ENCODE measurements at regions of chr1 and their contacts with region 1.

Region 1: DNA sequence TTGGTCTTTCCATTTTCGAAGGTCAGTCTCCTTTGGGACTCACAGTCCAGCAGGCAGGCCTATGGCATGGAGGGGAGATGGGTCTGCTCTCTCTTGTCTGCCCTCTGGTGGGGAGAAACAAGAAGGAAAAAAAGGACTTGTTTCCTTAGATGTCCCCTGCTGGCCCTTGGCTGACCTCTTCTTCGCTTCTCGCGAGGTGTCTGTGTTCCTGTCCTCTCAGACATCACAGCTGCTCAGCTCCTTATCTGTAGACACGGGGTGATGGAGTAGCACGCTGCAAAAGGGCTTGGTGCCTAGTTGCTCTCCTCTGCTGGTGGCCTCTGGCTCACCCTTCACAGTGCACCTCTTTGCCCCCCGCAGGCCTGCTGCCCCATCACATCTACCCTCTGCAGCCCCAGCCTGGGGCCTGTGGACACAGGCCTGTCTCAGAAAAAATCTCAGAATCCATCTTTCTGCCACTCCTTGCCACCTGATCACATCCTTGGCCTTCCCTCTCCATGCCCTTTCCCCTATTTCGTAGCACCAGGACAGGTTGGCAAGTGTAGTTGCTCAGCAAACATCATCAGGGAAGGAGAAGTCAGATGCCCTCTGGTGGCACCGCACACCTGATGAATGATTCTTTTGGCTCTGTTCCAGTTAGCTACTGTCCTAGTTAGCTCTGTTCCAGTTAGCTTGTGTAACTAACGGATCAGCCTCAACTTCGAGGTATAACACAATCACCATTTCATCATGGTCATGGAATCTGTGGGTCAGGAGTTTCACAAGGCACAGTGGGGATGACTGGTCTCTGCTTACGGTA is 18.7 kb upstream of the AK2 start:
- DNase-seq: peak; percentile 88
- H3K4me3 Mint-ChIP-seq: no peak overlapping the region
- H3K27ac Mint-ChIP-seq: peak overlapping the region; percentile 36
- H3K4me1 Mint-ChIP-seq: peaks cover 17% of the 10 kb centered on the region
- H3K27me3 Mint-ChIP-seq: no peaks in the 10 kb centered on the region
- CTCF ChIP-seq: peak; percentile 57

Region 2: DNA sequence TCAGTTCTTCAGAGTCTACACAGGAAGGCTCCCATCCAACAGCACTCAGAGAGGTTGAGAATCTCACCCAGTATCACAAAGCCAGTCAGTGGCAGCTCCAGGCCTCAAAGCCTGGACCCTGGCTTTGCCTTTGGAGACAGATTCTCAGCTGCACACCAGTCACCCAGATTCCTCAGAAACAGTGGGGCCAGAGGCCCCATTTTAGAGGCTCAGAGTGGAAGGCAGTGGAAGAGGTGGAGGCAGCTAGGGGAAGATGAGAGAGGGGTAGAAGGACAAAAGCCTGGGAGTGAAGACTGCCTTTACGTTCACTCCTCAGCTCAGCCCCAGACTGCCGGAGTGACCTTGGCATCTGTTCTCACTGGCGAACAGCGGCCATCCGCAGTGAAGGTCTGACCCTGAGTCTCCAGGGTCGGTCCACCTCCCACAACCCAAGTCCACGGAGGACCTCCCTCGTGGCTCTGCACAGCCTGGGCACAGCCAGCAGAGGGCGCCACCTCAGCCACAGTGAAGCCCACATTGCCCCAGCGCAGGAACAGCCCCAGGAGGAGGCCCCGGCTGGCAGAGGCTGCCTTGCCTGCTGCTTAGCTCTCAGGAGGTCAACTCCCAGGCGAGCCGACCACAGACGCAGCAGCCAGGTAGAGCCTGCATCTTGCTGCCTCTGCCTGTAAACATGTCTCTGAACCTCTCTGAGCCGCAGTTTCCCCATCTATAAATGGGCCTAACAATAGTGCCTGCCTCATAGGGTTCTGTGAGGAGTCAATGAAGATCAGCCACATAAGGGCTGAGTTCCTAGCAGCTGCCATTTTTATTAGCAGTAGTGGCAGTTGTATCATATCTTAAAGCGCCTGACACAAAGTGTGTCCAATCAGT is 178.8 kb before region 1 on chr1:
- CTCF ChIA-PET with region 1: interaction called, 13 read pairs
- POLR2A ChIA-PET with region 1: no interaction called
- intact Hi-C with region 1: no loop called
- DNase-seq: peak; percentile 58
- H3K4me3 Mint-ChIP-seq: no peak overlapping the region
- H3K27ac Mint-ChIP-seq: no peak overlapping the region
- H3K4me1 Mint-ChIP-seq: peaks cover 7% of the 10 kb centered on the region
- H3K27me3 Mint-ChIP-seq: peaks cover 10% of the 10 kb centered on the region
- CTCF ChIP-seq: peak; percentile 86

Region 3: GRCh38 chr1:33030575-33030974 is 24.8 kb before region 1 on chr1:
- CTCF ChIA-PET with region 1: interaction called, 17 read pairs
- POLR2A ChIA-PET with region 1: interaction called, 22 read pairs
- intact Hi-C with region 1: no loop called
- DNase-seq: peak; percentile 81
- H3K4me3 Mint-ChIP-seq: no peak overlapping the region
- H3K27ac Mint-ChIP-seq: no peak overlapping the region
- H3K4me1 Mint-ChIP-seq: peaks cover 40% of the 10 kb centered on the region
- H3K27me3 Mint-ChIP-seq: no peaks in the 10 kb centered on the region
- CTCF ChIP-seq: no peak

Region 4: GRCh38 chr1:33036526-33037503 is 18.6 kb before region 1 on chr1 and contains the start of gene AK2:
- CTCF ChIA-PET with region 1: interaction called, 17 read pairs
- POLR2A ChIA-PET with region 1: interaction called, 22 read pairs
- intact Hi-C with region 1: loop called (anchors 2 kb)
- DNase-seq: peak; percentile 99
- H3K4me3 Mint-ChIP-seq: peak within 1 kb of the TSS; percentile 98
- H3K27ac Mint-ChIP-seq: peak within 1 kb of the TSS; percentile 95
- H3K4me1 Mint-ChIP-seq: peaks cover 26% of the 10 kb centered on the region
- H3K27me3 Mint-ChIP-seq: no peaks in the 10 kb centered on the region
- CTCF ChIP-seq: no peak
- total RNA-seq, gene AK2: 286 and 390 TPM in 2 replicates

Region 5: GRCh38 chr1:33086384-33086850 is 31.0 kb after region 1 on chr1:
- CTCF ChIA-PET with region 1: interaction called, 10 read pairs
- POLR2A ChIA-PET with region 1: no interaction called
- intact Hi-C with region 1: no loop called
- DNase-seq: peak; percentile 80
- H3K4me3 Mint-ChIP-seq: no peak overlapping the region
- H3K27ac Mint-ChIP-seq: no peak overlapping the region
- H3K4me1 Mint-ChIP-seq: peaks cover 14% of the 10 kb centered on the region
- H3K27me3 Mint-ChIP-seq: no peaks in the 10 kb centered on the region
- CTCF ChIP-seq: peak; percentile 84

Region 6: DNA sequence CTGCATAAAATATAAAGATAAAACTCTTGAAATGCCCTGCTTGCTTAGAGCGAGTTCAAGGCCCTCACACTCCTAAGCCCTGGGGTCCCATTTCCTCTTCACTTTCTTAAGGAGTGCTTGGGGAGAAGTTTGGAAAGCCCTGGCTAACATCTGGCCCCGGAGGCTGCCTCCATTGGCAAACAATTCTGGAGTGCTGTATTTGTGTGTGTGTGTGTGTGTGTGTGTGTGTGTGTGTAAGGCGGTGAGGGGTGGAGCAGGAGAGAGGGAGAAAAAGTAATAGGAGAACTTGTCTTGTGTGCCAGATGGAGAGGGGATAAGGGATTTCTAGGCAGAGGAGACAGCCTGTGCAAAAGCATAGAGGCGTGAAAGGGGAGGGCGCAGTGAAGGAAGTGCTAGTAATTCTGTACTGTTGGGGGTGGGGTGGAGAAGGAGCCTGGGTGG is 127.0 kb after region 1 on chr1:
- CTCF ChIA-PET with region 1: no interaction called
- POLR2A ChIA-PET with region 1: no interaction called
- intact Hi-C with region 1: no loop called
- DNase-seq: peak; percentile 7
- H3K4me3 Mint-ChIP-seq: peak overlapping the region; percentile 77
- H3K27ac Mint-ChIP-seq: no peak overlapping the region
- H3K4me1 Mint-ChIP-seq: peaks cover 8% of the 10 kb centered on the region
- H3K27me3 Mint-ChIP-seq: no peaks in the 10 kb centered on the region
- CTCF ChIP-seq: no peak

Measured in MCF 10A (cell line).